Activated naive CD4-positive, alpha-beta T cell treated with anti-CD3 and anti-CD28 coated beads for 36 hours (primary cell): ENCODE measurements at regions of chr12 and their contacts with region 1.

Region 1: DNA sequence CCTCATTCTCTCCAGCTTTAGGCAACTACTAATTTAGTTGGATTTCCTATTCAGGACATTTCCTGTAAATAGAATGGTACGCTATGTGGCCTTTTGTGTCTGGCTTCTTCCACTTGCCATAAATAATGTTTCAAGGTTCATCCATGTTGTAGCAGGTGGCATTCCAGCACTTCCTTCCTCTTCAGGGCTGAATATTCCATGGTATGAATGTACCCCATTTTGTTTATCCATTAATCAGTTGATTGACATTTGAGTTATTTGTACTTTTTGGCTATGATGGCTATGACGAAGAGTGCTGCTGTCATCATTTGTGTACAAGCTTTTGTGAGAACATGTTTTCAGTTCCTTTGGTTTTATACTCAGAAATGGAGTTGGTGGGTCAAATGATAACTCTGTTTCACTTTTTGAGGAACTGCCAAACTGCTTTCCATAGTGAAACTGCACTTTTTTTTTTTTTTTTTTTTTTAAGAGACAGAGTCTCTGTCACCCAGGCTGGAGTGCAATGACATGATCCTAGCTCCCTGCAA is 6.5 kb upstream of the CDK2AP1 start:
- DNase-seq: peak; percentile 56
- H3K4me3 Mint-ChIP-seq: no peak overlapping the region
- H3K27ac Mint-ChIP-seq: no peak overlapping the region
- H3K4me1 Mint-ChIP-seq: peaks cover 6% of the 10 kb centered on the region
- H3K27me3 Mint-ChIP-seq: no peaks in the 10 kb centered on the region

Region 2: GRCh38 chr12:123223241-123223668 is 54.9 kb before region 1 on chr12:
- CTCF ChIA-PET with region 1: no interaction called
- intact Hi-C with region 1: no loop called
- DNase-seq: peak; percentile 73
- H3K4me3 Mint-ChIP-seq: peak overlapping the region; percentile 8
- H3K27ac Mint-ChIP-seq: peak overlapping the region; percentile 28
- H3K4me1 Mint-ChIP-seq: peaks cover 35% of the 10 kb centered on the region
- H3K27me3 Mint-ChIP-seq: no peaks in the 10 kb centered on the region

Region 3: DNA sequence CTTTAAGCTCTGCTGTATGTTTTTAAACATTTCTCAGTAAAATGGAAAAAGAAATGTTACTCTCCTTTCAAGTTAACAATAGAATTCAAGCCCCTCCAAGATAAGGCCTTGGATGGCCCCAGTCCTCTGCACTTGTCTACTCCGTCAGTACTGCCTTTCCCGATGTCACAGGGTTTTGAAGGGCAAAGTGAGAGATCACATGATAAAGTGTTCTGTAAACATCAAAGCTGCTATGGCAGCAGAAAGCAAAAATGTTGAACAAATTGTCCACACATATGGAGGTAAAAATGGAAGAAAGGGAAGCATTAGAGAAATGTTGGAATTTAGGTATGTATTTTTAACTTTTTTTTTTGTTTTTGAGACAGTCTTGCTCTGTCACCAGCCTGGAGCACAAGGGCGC is 27.0 kb after region 1 on chr12:
- CTCF ChIA-PET with region 1: interaction called, 3 read pairs
- intact Hi-C with region 1: loop called (anchors 1 kb)
- DNase-seq: no peak
- H3K4me3 Mint-ChIP-seq: no peak overlapping the region
- H3K27ac Mint-ChIP-seq: peak overlapping the region; percentile 44
- H3K4me1 Mint-ChIP-seq: no peaks in the 10 kb centered on the region
- H3K27me3 Mint-ChIP-seq: no peaks in the 10 kb centered on the region